Caco-2 (cell line): ENCODE measurements at regions of chr14 and their contacts with region 1.

Region 1: GRCh38 chr14:21014761-21015190 is 10.1 kb downstream of the NDRG2 start:
- DNase-seq: peak; percentile 82 to 90
- H3K4me3 ChIP-seq: no peak overlapping the region
- H3K4me3 Mint-ChIP-seq: no peak overlapping the region
- H3K27ac Mint-ChIP-seq: no peak overlapping the region
- H3K4me1 ChIP-seq: peaks cover 11% of the 10 kb centered on the region
- H3K4me1 Mint-ChIP-seq: peaks cover 7% of the 10 kb centered on the region
- H3K27me3 ChIP-seq: no peaks in the 10 kb centered on the region
- H3K27me3 Mint-ChIP-seq: no peaks in the 10 kb centered on the region
- CTCF ChIP-seq: peak; percentile 87 to 89

Region 2: DNA sequence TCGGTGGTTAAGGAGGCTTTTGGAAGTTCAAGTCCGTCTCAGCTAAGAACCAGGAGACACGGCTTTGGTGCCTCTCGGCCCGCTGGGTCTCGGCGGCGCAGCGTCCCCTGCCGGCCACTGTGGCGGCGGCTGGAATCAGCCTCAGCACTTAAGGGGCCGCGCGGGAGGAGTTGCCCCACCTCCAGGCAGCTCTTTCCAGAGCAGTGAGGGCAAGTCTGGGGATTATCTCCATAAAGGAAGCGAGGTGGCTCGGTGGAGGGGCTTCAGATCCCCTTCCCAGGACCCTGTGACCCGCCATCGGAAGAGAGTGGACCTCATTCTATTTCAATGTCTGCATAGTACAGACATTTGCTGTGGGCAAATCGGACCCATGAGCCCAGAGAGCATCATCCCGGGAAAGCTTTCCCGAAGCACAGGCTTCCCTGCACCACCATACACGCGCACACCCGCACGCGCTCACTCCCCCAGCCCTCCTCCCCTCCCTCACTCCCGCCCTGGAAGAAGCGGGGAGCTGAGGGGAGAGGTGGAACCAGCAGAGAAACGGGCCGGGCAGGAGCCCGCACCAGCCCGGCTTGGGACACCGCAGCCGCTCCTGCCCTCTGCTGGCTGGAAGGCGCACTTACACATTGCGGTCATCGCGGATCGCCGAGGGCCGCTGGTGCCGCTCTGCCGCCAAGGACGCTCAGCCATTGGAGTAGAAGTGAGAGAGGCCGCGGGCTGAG is 43.6 kb before region 1 on chr14:
- CTCF ChIA-PET with region 1: interaction called, 16 read pairs
- POLR2A ChIA-PET with region 1: no interaction called
- intact Hi-C with region 1: no loop called
- DNase-seq: peak; percentile 84 to 92
- H3K4me3 ChIP-seq: peak overlapping the region; percentile 71
- H3K4me3 Mint-ChIP-seq: peak overlapping the region; percentile 88
- H3K27ac Mint-ChIP-seq: peak overlapping the region; percentile 66
- H3K4me1 ChIP-seq: peaks cover 29% of the 10 kb centered on the region
- H3K4me1 Mint-ChIP-seq: peaks cover 23% of the 10 kb centered on the region
- H3K27me3 ChIP-seq: no peaks in the 10 kb centered on the region
- H3K27me3 Mint-ChIP-seq: peaks cover 11% of the 10 kb centered on the region
- CTCF ChIP-seq: peak; percentile 75 to 99

Region 3: GRCh38 chr14:21024585-21025370 is 10.0 kb after region 1 on chr14 and contains the start of gene NDRG2:
- CTCF ChIA-PET with region 1: interaction called, 13 read pairs
- POLR2A ChIA-PET with region 1: no interaction called
- intact Hi-C with region 1: no loop called
- DNase-seq: peak; percentile 84 to 86
- H3K4me3 ChIP-seq: peak within 1 kb of the TSS; percentile 73
- H3K4me3 Mint-ChIP-seq: peak within 1 kb of the TSS; percentile 72
- H3K27ac Mint-ChIP-seq: peak within 1 kb of the TSS; percentile 73
- H3K4me1 ChIP-seq: peaks cover 15% of the 10 kb centered on the region
- H3K4me1 Mint-ChIP-seq: peaks cover 18% of the 10 kb centered on the region
- H3K27me3 ChIP-seq: no peaks in the 10 kb centered on the region
- H3K27me3 Mint-ChIP-seq: no peaks in the 10 kb centered on the region
- CTCF ChIP-seq: no peak
- total RNA-seq, gene NDRG2: 16.4 and 17.7 TPM in 2 replicates

Region 4: GRCh38 chr14:21039585-21040369 is 25.0 kb after region 1 on chr14:
- CTCF ChIA-PET with region 1: interaction called, 229 read pairs
- POLR2A ChIA-PET with region 1: interaction called, 12 read pairs
- intact Hi-C with region 1: loop called (anchors 1 kb)
- DNase-seq: peak; percentile 54 to 68
- H3K4me3 ChIP-seq: no peak overlapping the region
- H3K4me3 Mint-ChIP-seq: no peak overlapping the region
- H3K27ac Mint-ChIP-seq: no peak overlapping the region
- H3K4me1 ChIP-seq: peaks cover 24% of the 10 kb centered on the region
- H3K4me1 Mint-ChIP-seq: peaks cover 21% of the 10 kb centered on the region
- H3K27me3 ChIP-seq: no peaks in the 10 kb centered on the region
- H3K27me3 Mint-ChIP-seq: peaks cover 10% of the 10 kb centered on the region
- CTCF ChIP-seq: peak; percentile 60 to 72

Region 5: GRCh38 chr14:21057803-21058675 is 43.3 kb after region 1 on chr14 and contains the start of gene RNASE8:
- CTCF ChIA-PET with region 1: interaction called, 5 read pairs
- POLR2A ChIA-PET with region 1: no interaction called
- intact Hi-C with region 1: loop called (anchors 5 kb)
- DNase-seq: no peak
- H3K4me3 ChIP-seq: no peak within 1 kb of the TSS
- H3K4me3 Mint-ChIP-seq: no peak within 1 kb of the TSS
- H3K27ac Mint-ChIP-seq: no peak within 1 kb of the TSS
- H3K4me1 ChIP-seq: peaks cover 17% of the 10 kb centered on the region
- H3K4me1 Mint-ChIP-seq: peaks cover 15% of the 10 kb centered on the region
- H3K27me3 ChIP-seq: no peaks in the 10 kb centered on the region
- H3K27me3 Mint-ChIP-seq: no peaks in the 10 kb centered on the region
- CTCF ChIP-seq: no peak
- total RNA-seq, gene RNASE8: not detected in 2 replicates

Region 6: DNA sequence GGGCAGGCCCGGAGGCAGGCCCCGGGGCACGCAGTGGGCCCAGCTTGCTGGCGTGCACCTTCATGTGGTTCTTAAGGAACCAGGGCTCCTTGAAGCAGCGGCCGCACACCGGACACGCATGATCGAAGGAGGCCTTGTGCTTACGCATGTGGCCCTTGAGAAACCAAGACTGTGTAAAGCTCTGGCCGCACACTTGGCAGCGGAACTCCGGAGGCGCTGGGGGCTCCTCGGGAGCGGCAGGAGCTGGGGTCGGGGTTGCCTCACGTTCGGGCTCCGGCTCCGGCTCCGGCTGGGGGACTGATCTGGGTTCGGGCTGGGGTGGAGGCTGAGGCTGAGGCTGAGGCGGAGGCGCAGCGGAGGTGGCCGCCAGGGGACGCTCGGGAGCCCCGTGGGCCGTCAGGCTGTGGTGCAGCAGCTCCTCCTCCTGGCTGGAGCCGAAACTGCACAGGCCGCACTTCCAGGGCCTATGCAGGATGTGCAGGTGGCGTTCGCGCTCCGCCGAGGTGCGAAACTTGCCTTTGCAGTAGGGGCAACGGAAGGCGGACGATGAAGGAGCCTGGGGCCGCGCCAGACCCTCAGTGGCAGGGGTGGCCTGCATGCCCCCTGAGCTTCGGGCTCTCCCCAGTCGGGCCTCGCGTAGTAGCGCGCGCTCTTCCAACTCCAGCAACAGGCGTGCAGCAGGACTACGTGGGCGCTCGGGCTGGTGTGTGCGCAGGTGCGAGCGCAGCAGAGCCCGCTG is 77.7 kb after region 1 on chr14:
- CTCF ChIA-PET with region 1: interaction called, 17 read pairs
- POLR2A ChIA-PET with region 1: no interaction called
- intact Hi-C with region 1: no loop called
- DNase-seq: peak in 1 of 2 experiments; percentile 86
- H3K4me3 ChIP-seq: no peak overlapping the region
- H3K4me3 Mint-ChIP-seq: no peak overlapping the region
- H3K27ac Mint-ChIP-seq: no peak overlapping the region
- H3K4me1 ChIP-seq: no peaks in the 10 kb centered on the region; the same call in 1 of the 2 replicates
- H3K4me1 Mint-ChIP-seq: peaks cover 15% of the 10 kb centered on the region
- H3K27me3 ChIP-seq: no peaks in the 10 kb centered on the region
- H3K27me3 Mint-ChIP-seq: no peaks in the 10 kb centered on the region
- CTCF ChIP-seq: peak; percentile 99